ENCODE measurements at regions of chr3 and their contacts with region 1.

Region 1: DNA sequence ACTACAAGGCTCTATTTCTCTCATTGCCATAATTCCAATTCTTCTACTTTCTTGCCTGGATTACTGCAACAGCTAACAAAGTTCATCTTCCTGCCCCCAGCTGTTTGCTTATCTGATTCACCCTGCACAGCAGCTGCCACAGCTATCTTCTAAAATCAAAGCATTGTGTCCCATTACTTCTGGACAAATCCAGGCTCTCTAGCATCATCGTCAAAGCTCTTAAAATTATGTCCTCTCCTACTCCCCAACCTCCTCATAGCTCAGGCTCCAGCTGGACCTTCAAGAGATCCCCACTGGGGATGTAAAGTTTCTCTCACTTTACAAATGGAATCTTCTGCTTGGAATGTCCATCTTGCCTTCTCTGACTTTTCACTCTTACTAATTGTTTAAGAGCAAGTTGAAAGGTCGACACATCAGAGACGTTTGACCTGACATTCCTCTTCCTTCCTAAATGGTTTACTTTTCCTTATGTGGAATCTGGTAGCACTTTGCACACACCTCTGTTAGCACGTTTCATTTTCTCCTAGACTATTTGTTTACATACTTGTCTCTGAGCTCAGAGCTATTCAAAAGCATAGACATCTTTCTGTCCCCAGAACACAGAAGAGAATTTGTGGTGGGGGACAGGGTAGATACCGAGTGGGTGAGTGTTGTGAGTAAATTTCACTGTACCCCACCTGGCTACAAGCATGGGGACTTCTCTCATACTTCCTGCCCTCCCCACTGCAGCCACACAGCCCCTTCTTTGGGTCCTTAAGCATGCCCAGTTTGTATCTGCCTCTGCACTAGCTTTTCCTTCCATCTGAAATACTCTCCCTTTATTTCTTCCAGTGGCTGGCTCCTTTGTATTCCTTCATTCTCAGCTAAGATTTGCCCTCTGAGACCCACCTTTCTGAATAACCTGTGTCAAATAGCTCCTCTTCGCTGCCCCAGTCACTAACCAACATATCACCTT is 77.9 kb downstream of the SERPINI1 start:
- DNase-seq: peak in 1 of 2 experiments; percentile 29
- H3K4me3 ChIP-seq: no peak overlapping the region
- H3K4me3 Mint-ChIP-seq: no peak overlapping the region
- H3K27ac Mint-ChIP-seq: no peak overlapping the region
- H3K4me1 ChIP-seq: peaks cover 20% of the 10 kb centered on the region
- H3K4me1 Mint-ChIP-seq: no peaks in the 10 kb centered on the region
- H3K27me3 ChIP-seq: no peaks in the 10 kb centered on the region
- H3K27me3 Mint-ChIP-seq: no peaks in the 10 kb centered on the region
- CTCF ChIP-seq: no peak

Region 2: DNA sequence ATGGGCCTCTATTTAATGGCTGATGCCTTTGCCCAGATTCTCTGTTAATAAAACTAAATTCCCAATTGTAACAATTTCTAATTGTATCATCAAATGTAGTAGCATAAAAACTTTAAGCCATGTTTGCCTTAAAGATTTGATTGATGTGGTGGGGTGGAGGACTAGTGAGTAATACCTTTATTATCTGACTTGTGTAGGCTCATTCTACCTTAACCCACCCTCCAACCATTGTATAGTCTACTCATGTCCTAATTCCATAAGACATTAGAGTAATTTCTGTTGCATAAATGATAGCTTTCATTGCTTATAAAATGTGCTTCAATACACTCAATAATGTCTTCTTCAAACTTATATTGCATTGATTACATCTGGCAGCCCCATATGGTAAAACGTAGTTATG is 52.1 kb before region 1 on chr3:
- CTCF ChIA-PET with region 1: no interaction called
- POLR2A ChIA-PET with region 1: no interaction called
- intact Hi-C with region 1: loop called (anchors 1 kb)
- DNase-seq: no peak
- H3K4me3 ChIP-seq: no peak overlapping the region
- H3K4me3 Mint-ChIP-seq: no peak overlapping the region
- H3K27ac Mint-ChIP-seq: no peak overlapping the region
- H3K4me1 ChIP-seq: no peaks in the 10 kb centered on the region; the same call in 1 of the 2 replicates
- H3K4me1 Mint-ChIP-seq: peaks cover 5% of the 10 kb centered on the region
- H3K27me3 ChIP-seq: no peaks in the 10 kb centered on the region
- H3K27me3 Mint-ChIP-seq: no peaks in the 10 kb centered on the region
- CTCF ChIP-seq: no peak

Region 3: GRCh38 chr3:168165390-168166269 is 352.2 kb after region 1 on chr3:
- CTCF ChIA-PET with region 1: no interaction called
- POLR2A ChIA-PET with region 1: no interaction called
- intact Hi-C with region 1: no loop called
- DNase-seq: peak; percentile 53 to 55
- H3K4me3 ChIP-seq: no peak overlapping the region
- H3K4me3 Mint-ChIP-seq: no peak overlapping the region
- H3K27ac Mint-ChIP-seq: no peak overlapping the region
- H3K4me1 ChIP-seq: no peaks in the 10 kb centered on the region
- H3K4me1 Mint-ChIP-seq: no peaks in the 10 kb centered on the region
- H3K27me3 ChIP-seq: no peaks in the 10 kb centered on the region
- H3K27me3 Mint-ChIP-seq: no peaks in the 10 kb centered on the region
- CTCF ChIP-seq: peak; percentile 68 to 73